Common myeloid progenitor, CD34-positive (primary cell): ENCODE measurements at regions of chr1 and their contacts with region 1.

Region 1: GRCh38 chr1:84690397-84691121 is at the start of gene SSX2IP:
- DNase-seq: peak; percentile 98 to 99 (median 99)
- H3K4me3 ChIP-seq: peak within 1 kb of the TSS; percentile 74 to 92 (median 83)
- H3K27ac ChIP-seq: peak within 1 kb of the TSS; percentile 62 to 89
- H3K4me1 ChIP-seq: peaks cover 17 to 48% (median 32%) of the 10 kb centered on the region in 4 experiments
- H3K27me3 ChIP-seq: no peaks in the 10 kb centered on the region

Region 2: GRCh38 chr1:84587099-84587498 is 103.5 kb before region 1 on chr1:
- CTCF ChIA-PET with region 1: no interaction called
- POLR2A ChIA-PET with region 1: no interaction called
- DNase-seq: no peak
- H3K4me3 ChIP-seq: no peak overlapping the region
- H3K27ac ChIP-seq: no peak overlapping the region
- H3K4me1 ChIP-seq: no peaks in the 10 kb centered on the region
- H3K27me3 ChIP-seq: no peaks in the 10 kb centered on the region

Region 3: GRCh38 chr1:84668185-84668584 is 22.4 kb before region 1 on chr1:
- CTCF ChIA-PET with region 1: interaction called, 23 read pairs
- POLR2A ChIA-PET with region 1: no interaction called
- DNase-seq: peak; percentile 31 to 55 (median 42)
- H3K4me3 ChIP-seq: no peak overlapping the region
- H3K27ac ChIP-seq: no peak overlapping the region
- H3K4me1 ChIP-seq: peaks cover 0 to 3% (median 0%) of the 10 kb centered on the region in 4 experiments
- H3K27me3 ChIP-seq: no peaks in the 10 kb centered on the region

Region 4: GRCh38 chr1:84677415-84678099 is 13.0 kb before region 1 on chr1:
- CTCF ChIA-PET with region 1: interaction called, 24 read pairs
- POLR2A ChIA-PET with region 1: no interaction called
- DNase-seq: no peak
- H3K4me3 ChIP-seq: no peak overlapping the region
- H3K27ac ChIP-seq: no peak overlapping the region
- H3K4me1 ChIP-seq: no peaks in the 10 kb centered on the region
- H3K27me3 ChIP-seq: no peaks in the 10 kb centered on the region

Region 5: GRCh38 chr1:84704872-84705426 is 14.4 kb after region 1 on chr1:
- CTCF ChIA-PET with region 1: interaction called, 12 read pairs
- POLR2A ChIA-PET with region 1: no interaction called
- DNase-seq: peak in 2 of 3 donors; percentile 58 to 63
- H3K4me3 ChIP-seq: no peak overlapping the region
- H3K27ac ChIP-seq: no peak overlapping the region
- H3K4me1 ChIP-seq: peaks cover 0 to 11% (median 3%) of the 10 kb centered on the region in 4 experiments
- H3K27me3 ChIP-seq: no peaks in the 10 kb centered on the region

Region 6: DNA sequence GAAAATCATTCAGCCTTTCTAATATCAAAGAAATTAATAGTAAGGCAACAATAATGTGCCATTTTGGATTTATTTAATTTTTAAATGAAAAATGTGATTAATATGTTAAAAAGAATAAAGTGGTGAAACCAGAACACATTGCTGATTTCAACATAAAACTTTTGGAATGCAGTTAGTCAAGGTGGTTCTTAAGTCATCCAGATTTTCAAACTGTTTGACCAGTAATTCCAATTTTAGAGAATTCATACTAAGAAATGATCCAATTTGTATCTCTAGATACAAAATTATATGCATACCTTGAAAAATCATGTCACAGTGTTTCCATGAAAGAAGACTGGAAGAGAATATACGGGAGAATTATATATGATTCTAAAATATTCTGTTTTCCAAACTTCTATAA is 411.9 kb after region 1 on chr1:
- CTCF ChIA-PET with region 1: no interaction called
- POLR2A ChIA-PET with region 1: no interaction called
- DNase-seq: no peak
- H3K4me3 ChIP-seq: no peak overlapping the region
- H3K27ac ChIP-seq: no peak overlapping the region
- H3K4me1 ChIP-seq: no peaks in the 10 kb centered on the region
- H3K27me3 ChIP-seq: no peaks in the 10 kb centered on the region